Mammary epithelial cell (primary cell): ENCODE measurements at regions of chr7 and their contacts with region 1.

Region 1: GRCh38 chr7:75842836-75843446 is 29.3 kb upstream of the CCL24 start:
- DNase-seq: peak; percentile 93
- H3K4me3 ChIP-seq: no peak overlapping the region
- H3K27ac ChIP-seq: peak overlapping the region; percentile 43
- H3K4me1 ChIP-seq: peaks cover 16% of the 10 kb centered on the region
- H3K27me3 ChIP-seq: no peaks in the 10 kb centered on the region
- CTCF ChIP-seq: no peak

Region 2: GRCh38 chr7:75789361-75789924 is 53.5 kb before region 1 on chr7:
- CTCF ChIA-PET with region 1: no interaction called
- dilution Hi-C with region 1: loop called (anchors 5 kb)
- in situ Hi-C with region 1: loop called in 1 of 2 experiments (anchors 10 kb)
- intact Hi-C with region 1: no loop called
- DNase-seq: no peak
- H3K4me3 ChIP-seq: no peak overlapping the region
- H3K27ac ChIP-seq: no peak overlapping the region
- H3K4me1 ChIP-seq: no peaks in the 10 kb centered on the region
- H3K27me3 ChIP-seq: no peaks in the 10 kb centered on the region
- CTCF ChIP-seq: no peak

Region 3: GRCh38 chr7:75795831-75796285 is 47.1 kb before region 1 on chr7:
- CTCF ChIA-PET with region 1: no interaction called
- dilution Hi-C with region 1: no loop called
- in situ Hi-C with region 1: loop called in 1 of 2 experiments (anchors 10 kb)
- intact Hi-C with region 1: no loop called
- DNase-seq: no peak
- H3K4me3 ChIP-seq: no peak overlapping the region
- H3K27ac ChIP-seq: no peak overlapping the region
- H3K4me1 ChIP-seq: no peaks in the 10 kb centered on the region
- H3K27me3 ChIP-seq: no peaks in the 10 kb centered on the region
- CTCF ChIP-seq: no peak

Region 4: DNA sequence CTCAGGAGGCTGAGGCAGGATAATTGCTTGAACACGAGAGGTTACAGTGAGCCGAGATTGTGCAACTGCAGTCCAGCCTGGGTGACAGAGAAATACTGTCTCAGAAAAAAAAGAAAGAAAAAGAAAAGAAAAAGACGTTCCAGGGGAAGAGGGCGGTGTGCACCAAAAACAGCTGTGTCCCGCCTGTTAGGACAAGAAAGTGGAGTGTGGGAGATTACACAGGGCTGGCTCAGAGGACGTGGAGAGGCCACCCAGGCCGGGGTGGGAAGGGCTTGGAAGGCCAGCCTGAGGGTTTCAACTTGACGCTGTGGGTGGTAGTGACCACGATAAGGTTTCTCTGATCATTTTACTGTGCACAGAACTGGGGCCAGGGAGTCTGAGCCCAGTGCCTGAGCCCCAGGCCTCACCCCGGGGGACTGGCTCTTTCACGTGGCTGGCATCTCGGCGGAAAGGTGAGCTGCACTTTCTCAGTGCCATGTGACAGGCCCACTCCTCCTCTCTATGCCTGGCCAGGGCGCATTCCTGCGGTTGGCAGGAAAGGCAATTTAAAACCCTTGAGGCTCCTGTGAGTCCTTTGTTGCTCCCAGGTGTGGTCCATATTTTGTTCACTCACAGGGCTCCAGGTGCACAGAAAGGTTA is 49.8 kb after region 1 on chr7:
- CTCF ChIA-PET with region 1: no interaction called
- dilution Hi-C with region 1: loop called (anchors 10 kb)
- in situ Hi-C with region 1: no loop called
- intact Hi-C with region 1: no loop called
- DNase-seq: peak; percentile 78
- H3K4me3 ChIP-seq: no peak overlapping the region
- H3K27ac ChIP-seq: peak overlapping the region; percentile 63
- H3K4me1 ChIP-seq: peaks cover 19% of the 10 kb centered on the region
- H3K27me3 ChIP-seq: no peaks in the 10 kb centered on the region
- CTCF ChIP-seq: no peak

Region 5: GRCh38 chr7:76133164-76133775 is 290.3 kb after region 1 on chr7:
- CTCF ChIA-PET with region 1: no interaction called
- dilution Hi-C with region 1: no loop called
- in situ Hi-C with region 1: no loop called
- intact Hi-C with region 1: no loop called
- DNase-seq: no peak
- H3K4me3 ChIP-seq: no peak overlapping the region
- H3K27ac ChIP-seq: no peak overlapping the region
- H3K4me1 ChIP-seq: no peaks in the 10 kb centered on the region
- H3K27me3 ChIP-seq: no peaks in the 10 kb centered on the region
- CTCF ChIP-seq: no peak